ENCODE measurements at regions of chr5 and their contacts with region 1.

Region 1: DNA sequence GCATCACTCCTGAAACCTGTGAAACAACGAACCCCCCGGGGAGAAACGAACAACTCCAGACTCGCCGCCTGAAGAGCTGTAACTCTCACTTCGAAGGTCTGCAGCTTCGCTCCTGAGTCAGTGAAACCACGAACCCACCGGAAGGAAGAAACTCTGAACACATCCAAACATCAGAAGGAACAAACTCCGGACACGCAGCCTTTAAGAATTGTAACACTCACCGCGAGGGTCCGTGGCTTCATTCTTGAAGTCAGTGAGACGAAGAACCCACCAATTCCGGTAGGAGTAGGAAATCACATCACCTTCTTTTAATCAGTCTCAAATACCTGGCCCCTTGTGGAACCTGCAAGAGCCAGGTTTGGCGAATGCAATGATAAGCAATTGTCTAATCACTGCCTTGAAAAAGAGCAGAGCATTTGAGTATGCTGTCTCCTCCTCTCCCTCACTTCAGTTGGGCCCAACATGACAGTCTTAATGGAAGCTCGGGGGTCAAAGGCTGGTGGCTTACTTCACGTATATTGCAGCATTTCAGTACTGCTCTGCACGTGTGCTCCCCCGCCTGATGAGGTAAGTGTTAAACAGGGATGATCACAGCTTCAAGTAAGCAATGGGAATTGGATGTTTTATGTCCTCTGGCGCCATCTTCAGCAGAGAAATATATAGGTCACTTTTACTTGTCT is 473 bp downstream of the IRGM start:
- DNase-seq: peak; percentile 85
- ATAC-seq: peak; percentile 93
- H3K4me3 Mint-ChIP-seq: peak overlapping the region; percentile 76
- H3K27ac Mint-ChIP-seq: peak overlapping the region; percentile 85
- H3K4me1 Mint-ChIP-seq: peaks cover 19% of the 10 kb centered on the region
- H3K27me3 Mint-ChIP-seq: no peaks in the 10 kb centered on the region
- CTCF ChIP-seq: peak; percentile 71

Region 2: GRCh38 chr5:150560401-150561193 is 286.2 kb before region 1 on chr5:
- CTCF ChIA-PET with region 1: interaction called, 50 read pairs
- POLR2A ChIA-PET with region 1: no interaction called
- intact Hi-C with region 1: loop called (anchors 2 kb)
- DNase-seq: peak; percentile 94
- ATAC-seq: peak; percentile 96
- H3K4me3 Mint-ChIP-seq: no peak overlapping the region
- H3K27ac Mint-ChIP-seq: no peak overlapping the region
- H3K4me1 Mint-ChIP-seq: no peaks in the 10 kb centered on the region
- H3K27me3 Mint-ChIP-seq: peaks cover 2% of the 10 kb centered on the region
- CTCF ChIP-seq: peak; percentile 92

Region 3: DNA sequence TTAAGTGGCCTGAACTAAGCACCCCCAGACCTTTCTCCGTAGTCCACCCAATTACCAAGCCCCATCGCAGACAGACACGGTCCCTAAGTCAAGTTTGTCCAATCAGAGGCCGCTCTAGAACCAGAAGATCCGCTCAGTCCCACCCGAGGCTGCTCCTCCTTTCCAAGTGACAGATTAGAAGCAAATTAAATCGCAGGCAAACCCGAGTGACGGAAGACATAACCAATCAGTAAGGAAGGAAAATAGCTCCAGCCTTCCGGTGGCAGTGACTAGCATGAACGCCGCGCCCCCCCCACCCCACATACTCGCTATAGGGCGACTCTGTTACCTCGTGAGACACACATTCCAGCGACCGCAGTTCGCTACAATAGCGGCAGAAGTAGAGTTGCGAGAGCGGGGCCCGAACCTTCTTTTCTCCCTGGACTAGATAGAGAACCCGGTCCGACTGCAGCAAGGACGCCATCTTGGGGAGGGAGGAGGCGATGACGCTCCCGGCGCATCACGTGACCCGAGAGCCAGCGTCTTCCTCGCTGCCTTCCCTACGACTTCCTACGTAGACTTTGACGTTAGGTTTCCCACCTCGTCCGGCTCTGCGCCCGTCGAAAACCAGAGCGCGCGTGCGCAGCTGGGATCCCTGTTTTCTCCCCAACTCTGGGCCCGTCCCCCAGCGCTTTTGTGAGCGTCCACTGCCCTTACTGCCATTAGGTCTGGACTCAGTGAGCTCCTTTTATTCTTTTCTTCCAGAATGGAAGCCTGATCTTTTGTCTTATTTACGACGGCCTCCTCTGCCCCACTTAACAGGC is 88.1 kb before region 1 on chr5 and contains the start of gene DCTN4:
- CTCF ChIA-PET with region 1: interaction called, 10 read pairs
- POLR2A ChIA-PET with region 1: interaction called, 9 read pairs
- intact Hi-C with region 1: no loop called
- DNase-seq: peak; percentile 96
- ATAC-seq: peak; percentile 96
- H3K4me3 Mint-ChIP-seq: no peak within 1 kb of the TSS
- H3K27ac Mint-ChIP-seq: no peak within 1 kb of the TSS
- H3K4me1 Mint-ChIP-seq: peaks cover 35% of the 10 kb centered on the region
- H3K27me3 Mint-ChIP-seq: peaks cover 3% of the 10 kb centered on the region
- CTCF ChIP-seq: no peak
- total RNA-seq, gene DCTN4: 30.1 to 35.5 TPM

Region 4: GRCh38 chr5:150789943-150790611 is 56.7 kb before region 1 on chr5:
- CTCF ChIA-PET with region 1: interaction called, 14 read pairs
- POLR2A ChIA-PET with region 1: interaction called, 13 read pairs
- intact Hi-C with region 1: no loop called
- DNase-seq: peak; percentile 92
- ATAC-seq: peak; percentile 98
- H3K4me3 Mint-ChIP-seq: peak overlapping the region; percentile 71
- H3K27ac Mint-ChIP-seq: peak overlapping the region; percentile 92
- H3K4me1 Mint-ChIP-seq: peaks cover 57% of the 10 kb centered on the region
- H3K27me3 Mint-ChIP-seq: no peaks in the 10 kb centered on the region
- CTCF ChIP-seq: no peak